Mammary epithelial cell (primary cell): ENCODE measurements at regions of chr4 and their contacts with region 1.

Region 1: GRCh38 chr4:160319221-160319867 is 1216.5 kb downstream of the RAPGEF2 start:
- DNase-seq: peak; percentile 96
- H3K4me3 ChIP-seq: peak overlapping the region in 1 of 3 experiments; percentile 15
- H3K27ac ChIP-seq: peak overlapping the region; percentile 84
- H3K4me1 ChIP-seq: peaks cover 30% of the 10 kb centered on the region
- H3K27me3 ChIP-seq: no peaks in the 10 kb centered on the region
- CTCF ChIP-seq: no peak

Region 2: DNA sequence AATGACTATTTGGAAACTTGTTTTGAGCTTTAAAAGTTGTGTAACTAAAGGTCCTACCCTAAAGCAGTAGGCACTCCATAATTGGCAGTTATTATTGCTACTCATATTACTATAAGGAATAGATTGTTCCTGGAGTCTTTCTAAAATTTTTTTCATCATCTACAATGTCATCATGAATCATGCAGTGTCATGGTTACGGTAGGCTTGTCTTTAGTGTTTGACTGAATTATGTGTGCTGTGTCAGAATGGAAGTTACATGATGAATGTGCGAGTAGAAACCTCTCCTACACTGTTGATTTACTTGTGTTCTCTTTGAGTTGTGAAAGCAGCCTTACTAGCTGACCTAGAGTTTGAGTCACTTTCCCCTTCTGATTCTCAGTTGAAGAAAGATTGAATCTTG is 116.5 kb before region 1 on chr4:
- CTCF ChIA-PET with region 1: no interaction called
- dilution Hi-C with region 1: no loop called
- in situ Hi-C with region 1: no loop called
- intact Hi-C with region 1: loop called (anchors 10 kb)
- DNase-seq: peak; percentile 98
- H3K4me3 ChIP-seq: no peak overlapping the region
- H3K27ac ChIP-seq: peak overlapping the region; percentile 77
- H3K4me1 ChIP-seq: peaks cover 4% of the 10 kb centered on the region
- H3K27me3 ChIP-seq: no peaks in the 10 kb centered on the region
- CTCF ChIP-seq: no peak

Region 3: GRCh38 chr4:160286051-160286450 is 33.3 kb before region 1 on chr4:
- CTCF ChIA-PET with region 1: no interaction called
- dilution Hi-C with region 1: no loop called
- in situ Hi-C with region 1: no loop called
- intact Hi-C with region 1: no loop called
- DNase-seq: no peak
- H3K4me3 ChIP-seq: no peak overlapping the region
- H3K27ac ChIP-seq: no peak overlapping the region
- H3K4me1 ChIP-seq: no peaks in the 10 kb centered on the region
- H3K27me3 ChIP-seq: no peaks in the 10 kb centered on the region
- CTCF ChIP-seq: no peak

Region 4: GRCh38 chr4:160375772-160376452 is 56.6 kb after region 1 on chr4:
- CTCF ChIA-PET with region 1: no interaction called
- dilution Hi-C with region 1: loop called (anchors 5 kb)
- in situ Hi-C with region 1: no loop called
- intact Hi-C with region 1: no loop called
- DNase-seq: peak; percentile 20
- H3K4me3 ChIP-seq: no peak overlapping the region
- H3K27ac ChIP-seq: no peak overlapping the region
- H3K4me1 ChIP-seq: no peaks in the 10 kb centered on the region
- H3K27me3 ChIP-seq: peaks cover 3% of the 10 kb centered on the region
- CTCF ChIP-seq: no peak